ENCODE measurements at regions of chr22 and their contacts with region 1.

Region 1: DNA sequence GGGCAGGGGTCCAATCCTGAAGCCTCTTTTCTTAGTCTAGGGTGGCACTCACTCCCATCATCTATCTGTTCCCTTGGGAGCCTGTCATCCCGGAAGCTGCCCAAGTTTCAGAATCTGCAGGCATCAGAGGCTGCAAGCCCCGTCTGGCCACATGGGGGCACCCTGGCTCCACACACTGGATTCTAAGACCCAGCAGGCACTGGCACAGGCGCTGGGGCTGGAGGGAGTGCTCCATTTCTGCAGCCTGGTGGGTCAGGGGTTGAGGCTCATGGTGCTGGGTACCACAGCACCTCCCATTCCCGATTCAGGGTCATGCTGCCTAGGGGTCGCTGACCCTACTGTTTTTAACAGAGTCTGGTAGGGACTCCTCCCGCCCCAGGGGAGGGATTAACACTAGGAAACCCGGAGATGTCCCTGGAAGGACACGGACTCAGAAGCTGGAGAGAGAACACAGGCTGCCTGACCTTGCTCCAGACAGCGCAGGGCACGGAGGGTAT is 243.9 kb upstream of the SYN3 start:
- DNase-seq: no peak
- H3K4me3 ChIP-seq: no peak overlapping the region
- CTCF ChIP-seq: peak; percentile 99

Region 2: GRCh38 chr22:32920032-32920628 is 382.0 kb before region 1 on chr22:
- CTCF ChIA-PET with region 1: no interaction called
- POLR2A ChIA-PET with region 1: no interaction called
- DNase-seq: no peak
- H3K4me3 ChIP-seq: no peak overlapping the region
- CTCF ChIP-seq: no peak

Region 3: GRCh38 chr22:33288078-33288477 is 14.0 kb before region 1 on chr22:
- CTCF ChIA-PET with region 1: interaction called, 17 read pairs
- POLR2A ChIA-PET with region 1: no interaction called
- DNase-seq: no peak
- H3K4me3 ChIP-seq: no peak overlapping the region
- CTCF ChIP-seq: no peak

Region 4: GRCh38 chr22:33361581-33361980 is 59.5 kb after region 1 on chr22:
- CTCF ChIA-PET with region 1: no interaction called
- POLR2A ChIA-PET with region 1: no interaction called
- DNase-seq: no peak
- H3K4me3 ChIP-seq: no peak overlapping the region
- CTCF ChIP-seq: no peak

Region 5: DNA sequence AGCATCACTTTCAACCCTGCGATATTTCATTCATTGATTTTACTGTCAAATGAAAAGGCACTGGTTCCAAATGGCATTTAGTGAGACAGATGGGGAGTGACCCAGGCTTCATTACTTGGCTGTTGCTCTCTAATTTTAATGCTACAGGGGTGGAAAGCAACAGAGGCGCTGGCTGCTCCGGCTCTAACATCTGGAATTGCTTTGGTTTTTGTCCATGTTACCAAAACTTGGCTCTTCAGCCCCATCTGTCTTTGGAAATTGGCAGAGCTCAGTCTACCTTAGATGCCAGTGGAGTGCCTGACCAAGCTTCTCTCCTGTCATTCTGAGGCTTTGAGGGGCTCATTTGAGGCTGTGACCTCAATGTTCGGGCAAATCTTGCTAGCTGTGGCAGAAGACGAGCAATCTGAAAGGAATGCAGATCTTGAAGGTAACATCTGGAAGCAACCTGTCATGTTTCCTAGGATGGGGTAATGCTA is 165.6 kb after region 1 on chr22:
- CTCF ChIA-PET with region 1: interaction called, 44 read pairs
- POLR2A ChIA-PET with region 1: no interaction called
- DNase-seq: no peak
- H3K4me3 ChIP-seq: no peak overlapping the region
- CTCF ChIP-seq: peak; percentile 19

Region 6: GRCh38 chr22:33519071-33519973 is 217.2 kb after region 1 on chr22:
- CTCF ChIA-PET with region 1: interaction called, 26 read pairs
- POLR2A ChIA-PET with region 1: no interaction called
- DNase-seq: peak; percentile 51
- H3K4me3 ChIP-seq: no peak overlapping the region; the same call in 1 of the 2 replicates
- CTCF ChIP-seq: peak; percentile 36

Region 7: DNA sequence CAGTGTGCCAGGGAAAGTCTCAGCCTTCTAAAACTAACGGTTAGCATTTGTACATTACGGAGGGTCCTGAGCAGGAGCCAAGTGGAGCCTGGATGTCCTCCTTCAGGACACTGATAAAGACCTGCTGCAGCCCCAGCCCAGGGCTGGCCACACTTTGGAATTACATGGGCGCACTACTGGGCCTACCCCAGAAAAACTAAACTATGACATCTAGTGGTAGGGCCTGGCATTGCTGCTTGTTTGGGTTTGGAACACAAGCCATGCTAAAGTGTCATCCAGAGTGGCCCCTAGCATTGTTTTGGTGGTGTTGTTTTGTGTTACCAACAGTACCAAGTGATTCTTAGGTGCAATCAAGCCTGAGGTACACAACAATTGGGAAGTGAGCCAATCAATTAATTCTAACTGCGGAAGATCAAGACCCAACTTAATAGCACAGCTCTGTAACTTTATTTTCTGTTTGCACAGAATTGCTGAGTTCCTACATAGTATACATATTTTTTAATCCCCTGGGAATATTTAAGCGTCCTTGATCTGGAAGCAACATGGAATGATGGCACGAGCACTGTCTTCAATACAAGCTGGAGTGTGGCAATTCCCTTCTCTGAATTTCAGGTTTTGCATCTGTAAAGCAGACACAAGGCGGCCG is 277.5 kb after region 1 on chr22:
- CTCF ChIA-PET with region 1: interaction called, 42 read pairs
- POLR2A ChIA-PET with region 1: no interaction called
- DNase-seq: no peak
- H3K4me3 ChIP-seq: no peak overlapping the region
- CTCF ChIP-seq: peak; percentile 91

Measured in AG04449 (cell line).